Endothelial cell of umbilical vein (primary cell): ENCODE measurements at regions of chr11 and their contacts with region 1.

Region 1: GRCh38 chr11:18203723-18204122 is 31.1 kb downstream of the MRGPRX4 start:
- DNase-seq: peak; percentile 5
- H3K4me3 ChIP-seq: no peak overlapping the region
- H3K27ac ChIP-seq: no peak overlapping the region
- H3K4me1 ChIP-seq: no peaks in the 10 kb centered on the region
- H3K27me3 ChIP-seq: peaks cover 2 to 3% of the 10 kb centered on the region in 2 experiments
- CTCF ChIP-seq: peak; percentile 45 to 62
- POLR2A ChIP-seq: no peak

Region 2: DNA sequence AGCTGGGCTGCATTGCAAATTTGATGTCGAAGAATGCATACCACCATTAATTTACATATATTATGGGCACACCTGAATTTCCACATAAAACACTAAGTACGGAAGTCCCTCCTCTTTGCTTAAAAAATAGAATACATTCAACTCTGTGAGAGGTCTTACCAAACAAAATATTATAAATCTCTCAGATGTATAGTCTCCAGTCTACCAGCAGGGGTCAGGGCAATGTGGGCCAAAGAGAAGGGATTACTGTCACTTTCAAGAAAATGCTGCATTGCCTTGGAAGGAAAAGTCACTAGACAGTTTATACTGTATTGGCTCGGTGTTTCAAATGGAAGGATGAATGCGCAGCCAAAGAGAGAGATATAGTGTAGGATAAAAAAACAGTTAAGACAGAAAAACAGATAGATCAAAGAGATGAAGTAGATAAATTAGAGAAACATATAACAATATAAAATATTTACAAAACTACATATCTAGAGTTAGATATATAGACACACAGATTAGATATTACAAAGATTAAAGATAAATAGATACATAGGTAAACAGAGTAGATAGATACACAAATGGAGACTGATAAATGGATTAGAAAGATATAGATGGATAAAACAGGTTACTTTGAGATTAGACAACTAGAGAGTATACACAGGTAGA is 211.8 kb before region 1 on chr11:
- CTCF ChIA-PET with region 1: interaction called, 56 read pairs
- POLR2A ChIA-PET with region 1: no interaction called
- dilution Hi-C with region 1: no loop called
- intact Hi-C with region 1: loop called (anchors 2 kb)
- DNase-seq: peak; percentile 59
- H3K4me3 ChIP-seq: no peak overlapping the region
- H3K27ac ChIP-seq: no peak overlapping the region
- H3K4me1 ChIP-seq: no peaks in the 10 kb centered on the region
- H3K27me3 ChIP-seq: no peaks in the 10 kb centered on the region
- CTCF ChIP-seq: peak; percentile 68 to 70
- POLR2A ChIP-seq: no peak

Region 3: GRCh38 chr11:18151581-18151980 is 52.1 kb before region 1 on chr11:
- CTCF ChIA-PET with region 1: no interaction called
- POLR2A ChIA-PET with region 1: no interaction called
- dilution Hi-C with region 1: no loop called
- intact Hi-C with region 1: no loop called
- DNase-seq: no peak
- H3K4me3 ChIP-seq: no peak overlapping the region
- H3K27ac ChIP-seq: no peak overlapping the region
- H3K4me1 ChIP-seq: no peaks in the 10 kb centered on the region
- H3K27me3 ChIP-seq: peaks cover 0 to 1% of the 10 kb centered on the region in 2 experiments
- CTCF ChIP-seq: no peak
- POLR2A ChIP-seq: no peak

Region 4: DNA sequence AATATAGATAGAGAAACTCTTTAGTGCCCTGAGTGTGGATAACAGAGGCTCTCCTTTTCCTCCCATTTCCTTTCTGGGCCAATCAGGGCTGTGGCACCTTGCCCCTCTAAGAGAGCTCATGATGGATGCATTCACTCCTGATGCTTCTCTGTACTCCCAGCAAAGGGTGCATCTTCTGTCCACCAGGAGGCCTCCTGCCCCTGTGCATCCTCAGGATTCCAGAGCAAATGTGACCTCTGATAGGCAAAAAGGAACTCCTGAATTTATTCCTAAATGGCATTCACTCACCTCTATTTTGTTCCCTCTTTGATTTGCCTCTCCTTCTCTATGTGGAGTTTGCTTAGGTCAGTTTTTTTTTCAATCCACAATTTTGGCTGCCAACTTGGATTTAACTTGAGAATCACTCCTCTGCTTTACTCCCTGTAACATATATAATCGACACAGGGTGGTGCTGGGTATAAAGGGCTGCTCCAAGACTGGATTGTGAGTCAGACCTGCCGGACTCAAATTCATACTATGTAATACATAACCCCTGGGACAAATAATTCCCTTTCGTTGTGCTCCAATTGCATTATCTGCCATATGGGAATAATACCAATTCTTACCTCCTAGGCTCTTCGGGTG is 32.2 kb before region 1 on chr11:
- CTCF ChIA-PET with region 1: interaction called, 13 read pairs
- POLR2A ChIA-PET with region 1: no interaction called
- dilution Hi-C with region 1: no loop called
- intact Hi-C with region 1: no loop called
- DNase-seq: no peak
- H3K4me3 ChIP-seq: no peak overlapping the region
- H3K27ac ChIP-seq: no peak overlapping the region
- H3K4me1 ChIP-seq: no peaks in the 10 kb centered on the region
- H3K27me3 ChIP-seq: peaks cover 0 to 3% of the 10 kb centered on the region in 2 experiments
- CTCF ChIP-seq: peak; percentile 29 to 34
- POLR2A ChIP-seq: no peak

Region 5: DNA sequence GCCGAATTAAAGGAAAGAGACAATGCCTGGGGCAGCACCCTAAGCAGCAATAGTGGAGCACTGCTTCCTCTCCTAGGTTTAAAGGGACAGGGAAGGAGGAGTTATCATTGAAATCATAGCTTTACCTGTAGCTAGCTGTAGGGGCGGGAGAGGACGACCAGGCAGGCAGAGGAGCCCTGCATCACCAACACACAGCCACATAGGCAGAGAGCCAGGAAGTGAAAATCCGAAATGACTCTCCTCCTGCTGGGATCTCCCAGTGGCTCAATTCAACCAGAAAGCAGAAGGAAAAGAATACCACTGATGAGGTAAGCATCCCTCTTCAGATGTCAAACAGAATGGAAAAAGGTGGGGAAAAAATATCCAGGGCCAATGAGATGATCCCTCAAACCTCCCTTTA is 10.7 kb before region 1 on chr11:
- CTCF ChIA-PET with region 1: interaction called, 11 read pairs
- POLR2A ChIA-PET with region 1: no interaction called
- dilution Hi-C with region 1: no loop called
- intact Hi-C with region 1: no loop called
- DNase-seq: no peak
- H3K4me3 ChIP-seq: no peak overlapping the region
- H3K27ac ChIP-seq: no peak overlapping the region
- H3K4me1 ChIP-seq: no peaks in the 10 kb centered on the region
- H3K27me3 ChIP-seq: peaks cover 0 to 2% of the 10 kb centered on the region in 2 experiments
- CTCF ChIP-seq: no peak
- POLR2A ChIP-seq: no peak